OCI-LY7 (cell line): ENCODE measurements at regions of chr14 and their contacts with region 1.

Region 1: GRCh38 chr14:60091550-60092530 is at the start of gene PCNX4:
- DNase-seq: peak; percentile 99
- H3K4me3 ChIP-seq: peak within 1 kb of the TSS; percentile 82
- H3K27ac ChIP-seq: peak within 1 kb of the TSS; percentile 86
- H3K4me1 ChIP-seq: peaks cover 33% of the 10 kb centered on the region
- CTCF ChIP-seq: no peak
- total RNA-seq, gene PCNX4: 47.0 and 49.1 TPM in 2 replicates

Region 2: DNA sequence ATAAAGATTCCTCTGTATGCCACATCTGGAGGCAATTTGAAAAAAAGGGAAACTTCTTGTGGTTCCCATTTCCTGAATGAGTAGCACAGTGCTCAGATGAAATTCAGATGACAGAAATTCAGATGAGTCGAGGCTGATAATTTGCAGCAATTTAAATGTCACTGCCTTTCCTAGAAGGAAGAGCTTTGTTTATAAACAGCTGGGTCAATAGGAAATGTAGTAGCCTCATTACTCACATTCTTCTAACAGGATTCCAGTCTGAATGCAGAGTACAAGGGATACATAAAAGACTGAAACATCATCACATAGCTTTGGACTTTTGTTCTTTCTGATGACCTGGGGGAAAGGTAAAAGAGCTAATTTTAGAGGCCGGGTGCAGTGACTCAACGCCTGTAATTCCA is 1465.4 kb before region 1 on chr14:
- CTCF ChIA-PET with region 1: no interaction called
- POLR2A ChIA-PET with region 1: no interaction called
- intact Hi-C with region 1: no loop called
- DNase-seq: no peak
- H3K4me3 ChIP-seq: no peak overlapping the region
- H3K27ac ChIP-seq: no peak overlapping the region
- H3K4me1 ChIP-seq: no peaks in the 10 kb centered on the region
- CTCF ChIP-seq: no peak

Region 3: DNA sequence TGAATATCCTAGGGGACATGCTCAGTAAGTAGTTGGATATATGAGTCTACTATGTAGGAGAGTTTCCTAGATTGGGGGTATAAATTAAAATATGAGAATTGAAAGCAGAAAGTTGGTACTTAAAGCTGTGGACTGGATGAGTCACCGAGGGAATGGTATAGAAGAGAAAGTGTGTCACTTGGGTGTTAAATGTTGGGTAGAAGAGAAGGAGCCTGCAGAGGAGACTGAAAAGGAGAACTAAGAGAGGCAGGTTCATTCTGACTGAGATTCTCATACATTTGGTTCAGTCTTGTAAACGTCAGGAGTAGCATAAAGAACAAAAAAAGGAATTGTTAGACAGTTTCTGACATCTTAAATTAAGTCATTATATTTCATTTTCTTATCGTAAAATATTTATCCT is 152.0 kb before region 1 on chr14:
- CTCF ChIA-PET with region 1: no interaction called
- POLR2A ChIA-PET with region 1: interaction called, 5 read pairs
- intact Hi-C with region 1: loop called (anchors 5 kb)
- DNase-seq: no peak
- H3K4me3 ChIP-seq: no peak overlapping the region
- H3K27ac ChIP-seq: no peak overlapping the region
- H3K4me1 ChIP-seq: no peaks in the 10 kb centered on the region
- CTCF ChIP-seq: no peak

Region 4: GRCh38 chr14:59964251-59965007 is 127.4 kb before region 1 on chr14:
- CTCF ChIA-PET with region 1: no interaction called
- POLR2A ChIA-PET with region 1: interaction called, 4 read pairs
- intact Hi-C with region 1: loop called (anchors 1 kb)
- DNase-seq: peak; percentile 15
- H3K4me3 ChIP-seq: peak overlapping the region; percentile 56
- H3K27ac ChIP-seq: peak overlapping the region; percentile 73
- H3K4me1 ChIP-seq: peaks cover 14% of the 10 kb centered on the region
- CTCF ChIP-seq: no peak

Region 5: GRCh38 chr14:60106339-60106738 is 14.5 kb after region 1 on chr14:
- CTCF ChIA-PET with region 1: no interaction called
- POLR2A ChIA-PET with region 1: interaction called, 10 read pairs
- intact Hi-C with region 1: no loop called
- DNase-seq: no peak
- H3K4me3 ChIP-seq: no peak overlapping the region
- H3K27ac ChIP-seq: no peak overlapping the region
- H3K4me1 ChIP-seq: no peaks in the 10 kb centered on the region
- CTCF ChIP-seq: no peak

Region 6: DNA sequence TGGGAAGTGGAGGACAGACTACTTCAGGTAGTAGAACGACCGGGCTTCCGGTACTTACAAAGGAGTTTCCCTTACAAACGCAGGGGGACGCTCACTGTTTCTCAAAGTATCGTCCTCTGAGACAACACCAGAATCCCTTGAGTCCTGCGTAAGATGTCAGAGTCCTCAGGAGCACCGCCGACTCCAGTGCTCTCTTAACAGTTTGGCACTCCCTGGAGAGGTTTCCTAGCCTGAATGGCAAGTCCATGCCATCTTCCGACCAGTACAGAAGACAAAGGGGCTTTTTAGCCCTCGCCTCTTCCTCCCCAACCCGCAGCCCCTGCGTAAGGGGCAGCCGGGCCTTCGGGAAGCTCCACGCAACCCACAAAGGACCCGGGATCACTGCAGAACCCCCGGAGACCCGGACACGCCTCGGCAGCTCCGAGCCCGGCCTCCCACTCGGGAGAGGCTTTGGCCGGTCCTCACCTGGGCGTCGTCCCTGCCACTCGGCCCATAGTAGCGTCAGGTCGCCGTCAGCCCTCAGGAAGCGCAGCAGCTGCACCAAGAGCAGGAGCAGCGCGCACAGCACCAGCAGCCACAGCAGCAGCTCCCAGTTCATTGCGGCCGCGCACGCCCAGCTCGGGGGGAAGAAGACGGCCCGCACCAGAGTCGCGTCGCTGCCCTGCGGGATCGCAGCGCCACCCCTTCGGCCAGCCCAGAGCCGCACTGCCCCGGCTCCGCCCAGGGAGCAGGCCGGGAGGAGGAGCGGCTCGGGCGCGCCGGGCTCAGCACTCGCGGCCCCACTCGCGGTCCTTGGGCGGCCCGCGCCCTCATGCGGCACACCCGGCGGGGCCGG is 73.1 kb after region 1 on chr14 and contains the start of gene DHRS7:
- CTCF ChIA-PET with region 1: no interaction called
- POLR2A ChIA-PET with region 1: interaction called, 26 read pairs
- intact Hi-C with region 1: loop called (anchors 1 kb)
- DNase-seq: peak; percentile 88
- H3K4me3 ChIP-seq: peak within 1 kb of the TSS; percentile 70
- H3K27ac ChIP-seq: peak within 1 kb of the TSS; percentile 69
- H3K4me1 ChIP-seq: peaks cover 28% of the 10 kb centered on the region
- CTCF ChIP-seq: peak; percentile 63
- total RNA-seq, gene DHRS7: 30.9 and 32.7 TPM in 2 replicates

Region 7: DNA sequence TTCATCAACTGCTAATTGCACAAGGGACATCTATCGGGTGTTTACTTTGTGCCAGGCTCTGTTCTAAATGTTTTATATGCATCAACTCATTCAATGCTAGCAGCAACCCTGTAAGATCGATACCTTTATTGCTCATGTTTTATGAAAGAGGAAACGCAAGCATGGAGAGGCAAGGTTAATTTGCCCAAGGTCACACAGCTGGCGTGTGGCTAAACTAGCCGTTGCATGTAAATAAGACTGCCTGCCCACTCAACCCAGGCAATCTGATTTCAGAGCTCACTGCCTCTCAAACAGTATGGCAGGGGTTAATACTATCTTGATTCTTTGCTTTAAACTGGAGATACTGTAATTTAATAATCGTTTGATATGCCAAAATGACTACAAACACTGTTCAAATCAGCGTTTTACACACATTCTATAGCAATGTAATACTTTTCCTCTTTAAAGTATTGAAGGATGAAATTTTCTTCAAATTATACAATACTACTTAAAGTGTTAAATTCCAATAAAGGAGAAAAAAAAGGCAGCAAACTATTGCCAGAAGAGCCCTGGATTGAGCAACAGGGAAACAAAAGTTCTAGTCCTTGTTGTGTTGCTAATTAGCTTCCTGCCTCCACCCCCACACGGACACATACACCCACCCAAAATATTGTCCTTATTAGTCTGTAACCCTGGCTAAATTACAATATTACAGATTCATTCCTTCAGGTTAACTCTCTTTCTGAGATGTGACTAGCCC is 112.4 kb after region 1 on chr14:
- CTCF ChIA-PET with region 1: no interaction called
- POLR2A ChIA-PET with region 1: interaction called, 3 read pairs
- intact Hi-C with region 1: loop called (anchors 5 kb)
- DNase-seq: peak; percentile 94
- H3K4me3 ChIP-seq: peak overlapping the region; percentile 52
- H3K27ac ChIP-seq: peak overlapping the region; percentile 96
- H3K4me1 ChIP-seq: peaks cover 44% of the 10 kb centered on the region
- CTCF ChIP-seq: no peak

Region 8: DNA sequence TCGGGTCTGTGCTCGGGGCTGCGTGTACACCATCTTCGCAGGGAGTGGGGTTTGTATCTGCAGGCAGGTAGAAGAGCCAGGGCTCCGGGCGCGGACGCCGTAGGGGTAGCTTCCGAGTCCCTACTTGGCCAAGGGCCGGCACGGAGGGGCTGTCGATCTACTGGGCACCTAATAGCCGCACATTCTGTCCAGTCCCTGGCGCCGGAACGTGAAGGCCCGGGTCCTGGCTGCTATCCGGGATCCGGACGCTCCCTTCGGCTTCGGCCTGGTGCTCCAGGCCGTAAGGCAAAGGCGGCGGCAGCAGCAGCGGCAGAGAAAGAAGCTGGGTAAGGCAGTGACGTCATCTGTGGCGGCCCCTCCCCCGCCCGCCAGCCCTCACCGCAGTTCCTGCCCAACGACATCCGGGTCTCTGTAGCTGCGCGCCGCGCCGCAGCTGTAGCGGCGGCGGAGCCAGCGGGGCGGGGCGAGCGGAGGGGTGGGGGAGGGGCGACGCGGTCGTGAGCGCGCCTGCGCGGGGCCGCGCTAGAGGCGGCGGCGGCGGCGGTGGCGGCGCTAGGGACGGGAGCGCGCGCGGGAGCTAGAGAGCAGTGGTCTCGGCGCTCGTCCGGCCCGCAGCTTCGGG is 157.0 kb after region 1 on chr14 and contains the start of gene PPM1A:
- CTCF ChIA-PET with region 1: no interaction called
- POLR2A ChIA-PET with region 1: interaction called, 4 read pairs
- intact Hi-C with region 1: loop called (anchors 1 kb)
- DNase-seq: peak; percentile 97
- H3K4me3 ChIP-seq: peak within 1 kb of the TSS; percentile 87
- H3K27ac ChIP-seq: peak within 1 kb of the TSS; percentile 92
- H3K4me1 ChIP-seq: peaks cover 55% of the 10 kb centered on the region
- CTCF ChIP-seq: no peak
- total RNA-seq, gene PPM1A: 25.4 and 28.8 TPM in 2 replicates

Region 9: GRCh38 chr14:60356906-60357550 is 265.2 kb after region 1 on chr14:
- CTCF ChIA-PET with region 1: no interaction called
- POLR2A ChIA-PET with region 1: no interaction called
- intact Hi-C with region 1: no loop called
- DNase-seq: no peak
- H3K4me3 ChIP-seq: no peak overlapping the region
- H3K27ac ChIP-seq: no peak overlapping the region
- H3K4me1 ChIP-seq: no peaks in the 10 kb centered on the region
- CTCF ChIP-seq: no peak